ENCODE measurements at regions of chr17 and their contacts with region 1.

Region 1: GRCh38 chr17:50865984-50866774 is at the start of gene TOB1:
- DNase-seq: peak; percentile 92 to 96 (median 95)
- H3K4me3 ChIP-seq: peak within 1 kb of the TSS; percentile 89 to 97 (median 96)
- H3K4me3 Mint-ChIP-seq: peak within 1 kb of the TSS; percentile 97 to 99
- H3K27ac ChIP-seq: peak within 1 kb of the TSS; percentile 94 to 100
- H3K27ac Mint-ChIP-seq: peak within 1 kb of the TSS; percentile 99 to 100 (median 100)
- H3K4me1 ChIP-seq: peaks cover 23 to 51% of the 10 kb centered on the region in 2 donors
- H3K4me1 Mint-ChIP-seq: peaks cover 41% of the 10 kb centered on the region
- H3K27me3 ChIP-seq: no peaks in the 10 kb centered on the region
- H3K27me3 Mint-ChIP-seq: peaks cover 0 to 2% (median 2%) of the 10 kb centered on the region in 3 donors
- CTCF ChIP-seq: no peak
- polyA plus RNA-seq, gene TOB1: 18.5 to 107 (median 41.0) TPM

Region 2: DNA sequence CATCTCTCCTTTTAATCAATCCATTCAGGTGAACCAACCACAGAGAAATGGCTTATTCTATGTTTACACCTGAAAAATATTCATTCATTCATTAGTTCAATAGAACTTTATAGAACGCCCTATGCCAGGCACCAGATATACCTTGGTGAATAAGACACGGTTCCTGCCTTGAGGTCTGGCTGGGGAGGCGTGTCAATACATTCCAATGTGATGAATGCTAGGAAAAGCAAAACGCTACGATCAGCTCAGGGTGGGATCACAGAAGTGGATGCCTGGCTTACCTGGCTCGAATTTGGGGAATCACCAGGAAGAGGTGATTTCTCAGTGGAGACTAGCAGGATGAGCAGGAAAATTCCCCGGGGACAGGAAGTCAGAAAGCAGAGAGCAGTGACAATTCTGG is 48.3 kb before region 1 on chr17:
- intact Hi-C with region 1: no loop called
- DNase-seq: no peak
- H3K4me3 ChIP-seq: no peak overlapping the region
- H3K4me3 Mint-ChIP-seq: no peak overlapping the region
- H3K27ac ChIP-seq: no peak overlapping the region
- H3K27ac Mint-ChIP-seq: no peak overlapping the region
- H3K4me1 ChIP-seq: peaks cover 10 to 12% of the 10 kb centered on the region in 2 donors
- H3K4me1 Mint-ChIP-seq: peaks cover 21% of the 10 kb centered on the region
- H3K27me3 ChIP-seq: no peaks in the 10 kb centered on the region
- H3K27me3 Mint-ChIP-seq: peaks cover 4 to 11% (median 7%) of the 10 kb centered on the region in 3 donors
- CTCF ChIP-seq: no peak

Region 3: DNA sequence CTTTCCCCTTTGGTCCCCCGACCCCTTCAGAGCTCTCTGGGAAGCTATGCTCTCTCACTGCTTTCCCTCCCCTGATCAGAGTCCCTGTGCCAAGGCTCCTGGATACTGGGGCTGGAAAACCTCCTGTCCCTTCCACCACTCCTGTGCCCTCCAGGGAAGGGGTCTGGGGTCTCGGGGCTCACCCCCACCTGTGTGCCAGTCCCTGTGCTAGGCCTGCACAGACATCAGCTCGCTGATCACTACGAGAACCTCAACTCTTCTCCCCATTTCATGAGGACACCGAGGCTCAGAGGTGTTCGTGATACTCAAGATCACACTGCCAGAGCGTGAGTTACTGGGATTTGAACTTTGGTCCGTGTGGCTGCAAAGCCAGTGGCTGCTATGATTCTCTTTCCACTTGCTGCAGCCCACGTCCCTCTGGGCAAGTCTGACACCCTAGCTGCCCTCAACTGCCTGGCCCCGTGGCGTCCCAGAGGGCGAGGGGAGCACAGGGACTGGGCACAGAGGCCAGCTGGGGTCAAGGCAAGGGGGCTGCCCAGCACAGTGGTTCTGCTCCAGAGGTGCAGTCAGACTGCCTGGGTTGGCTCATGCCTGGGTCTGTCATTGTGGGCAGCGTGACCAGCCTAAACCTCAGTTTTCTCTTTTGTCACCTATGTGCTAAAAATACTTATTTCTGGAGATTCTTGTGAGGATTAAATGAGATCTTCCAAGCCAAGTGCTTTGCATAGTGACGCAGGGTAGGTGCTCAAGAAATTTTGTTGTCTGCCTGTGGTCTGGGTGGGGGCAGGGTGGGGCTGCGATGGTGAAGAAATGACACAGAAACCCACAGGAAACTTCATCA is 43.8 kb after region 1 on chr17:
- intact Hi-C with region 1: loop called (anchors 2 to 10 kb)
- DNase-seq: peak; percentile 60 to 72 (median 66)
- H3K4me3 ChIP-seq: peak overlapping the region in 1 of 3 experiments; percentile 23
- H3K4me3 Mint-ChIP-seq: peak overlapping the region in 1 of 2 donors; percentile 47
- H3K27ac ChIP-seq: peak overlapping the region; percentile 78
- H3K27ac Mint-ChIP-seq: peak overlapping the region; percentile 80 to 94 (median 92)
- H3K4me1 ChIP-seq: peaks cover 46 to 50% of the 10 kb centered on the region in 2 donors
- H3K4me1 Mint-ChIP-seq: peaks cover 48% of the 10 kb centered on the region
- H3K27me3 ChIP-seq: no peaks in the 10 kb centered on the region
- H3K27me3 Mint-ChIP-seq: peaks cover 0 to 4% (median 3%) of the 10 kb centered on the region in 3 donors
- CTCF ChIP-seq: no peak

Region 4: GRCh38 chr17:50931144-50931908 is 65.1 kb after region 1 on chr17:
- intact Hi-C with region 1: loop called in 1 of 2 experiments (anchors 2 kb)
- DNase-seq: peak; percentile 74 to 83 (median 76)
- H3K4me3 ChIP-seq: peak overlapping the region; percentile 13 to 67 (median 17)
- H3K4me3 Mint-ChIP-seq: peak overlapping the region; percentile 70 to 87
- H3K27ac ChIP-seq: peak overlapping the region; percentile 76 to 86
- H3K27ac Mint-ChIP-seq: peak overlapping the region; percentile 91 to 97 (median 96)
- H3K4me1 ChIP-seq: peaks cover 79 to 87% of the 10 kb centered on the region in 2 donors
- H3K4me1 Mint-ChIP-seq: peaks cover 84% of the 10 kb centered on the region
- H3K27me3 ChIP-seq: no peaks in the 10 kb centered on the region
- H3K27me3 Mint-ChIP-seq: peaks cover 0 to 6% (median 3%) of the 10 kb centered on the region in 3 donors
- CTCF ChIP-seq: no peak

Region 5: GRCh38 chr17:50956750-50957523 is 90.8 kb after region 1 on chr17:
- intact Hi-C with region 1: loop called in 1 of 2 experiments (anchors 2 kb)
- DNase-seq: peak; percentile 54 to 69 (median 69)
- H3K4me3 ChIP-seq: no peak overlapping the region
- H3K4me3 Mint-ChIP-seq: no peak overlapping the region
- H3K27ac ChIP-seq: no peak overlapping the region
- H3K27ac Mint-ChIP-seq: peak overlapping the region in 3 of 7 donors; percentile 21 to 75 (median 61)
- H3K4me1 ChIP-seq: peaks cover 4 to 12% of the 10 kb centered on the region in 2 donors
- H3K4me1 Mint-ChIP-seq: peaks cover 19% of the 10 kb centered on the region
- H3K27me3 ChIP-seq: no peaks in the 10 kb centered on the region
- H3K27me3 Mint-ChIP-seq: peaks cover 4 to 12% (median 6%) of the 10 kb centered on the region in 3 donors
- CTCF ChIP-seq: peak; percentile 89

Measured in CD14-positive monocyte (primary cell).